Mammary epithelial cell (primary cell): ENCODE measurements at regions of chr6 and their contacts with region 1.

Region 1: GRCh38 chr6:129709769-129710449 is at the start of gene ARHGAP18:
- DNase-seq: peak; percentile 95
- H3K4me3 ChIP-seq: peak within 1 kb of the TSS; percentile 61 to 80 (median 77)
- H3K27ac ChIP-seq: peak within 1 kb of the TSS; percentile 65
- H3K4me1 ChIP-seq: peaks cover 18% of the 10 kb centered on the region
- H3K27me3 ChIP-seq: no peaks in the 10 kb centered on the region
- CTCF ChIP-seq: no peak
- total RNA-seq, gene ARHGAP18: 20.8 to 28.5 TPM

Region 2: DNA sequence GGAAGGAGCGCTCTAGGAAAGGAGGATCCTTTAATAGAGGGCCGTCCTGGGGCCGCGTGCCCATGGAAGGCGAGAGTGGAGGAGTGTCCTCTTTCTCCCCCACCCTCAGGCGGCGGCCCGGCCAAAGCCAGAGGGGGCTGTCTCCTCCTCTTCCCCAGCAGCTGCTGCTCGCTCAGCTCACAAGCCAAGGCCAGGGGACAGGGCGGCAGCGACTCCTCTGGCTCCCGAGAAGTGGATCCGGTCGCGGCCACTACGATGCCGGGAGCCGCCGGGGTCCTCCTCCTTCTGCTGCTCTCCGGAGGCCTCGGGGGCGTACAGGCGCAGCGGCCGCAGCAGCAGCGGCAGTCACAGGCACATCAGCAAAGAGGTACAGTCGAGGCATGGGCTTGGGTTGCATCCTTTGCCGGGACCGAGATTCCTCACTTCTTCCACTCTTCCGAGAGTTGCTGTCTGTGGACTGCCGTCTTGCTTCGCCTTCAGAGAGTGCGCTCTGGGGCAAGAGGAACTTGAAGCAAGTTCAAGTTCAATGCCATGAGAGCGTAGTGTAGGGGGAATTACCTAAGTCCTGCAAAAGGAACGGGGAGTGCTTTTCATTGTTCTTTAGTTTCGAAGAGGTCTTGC is 826.8 kb before region 1 on chr6 and contains the start of gene LAMA2:
- CTCF ChIA-PET with region 1: no interaction called
- dilution Hi-C with region 1: no loop called
- in situ Hi-C with region 1: no loop called
- intact Hi-C with region 1: no loop called
- DNase-seq: no peak
- H3K4me3 ChIP-seq: peak within 1 kb of the TSS in 2 of 3 experiments; percentile 1 to 8
- H3K27ac ChIP-seq: no peak within 1 kb of the TSS
- H3K4me1 ChIP-seq: peaks cover 4% of the 10 kb centered on the region
- H3K27me3 ChIP-seq: peaks cover 9% of the 10 kb centered on the region
- CTCF ChIP-seq: no peak
- total RNA-seq, gene LAMA2: 0.50 to 0.73 TPM

Region 3: DNA sequence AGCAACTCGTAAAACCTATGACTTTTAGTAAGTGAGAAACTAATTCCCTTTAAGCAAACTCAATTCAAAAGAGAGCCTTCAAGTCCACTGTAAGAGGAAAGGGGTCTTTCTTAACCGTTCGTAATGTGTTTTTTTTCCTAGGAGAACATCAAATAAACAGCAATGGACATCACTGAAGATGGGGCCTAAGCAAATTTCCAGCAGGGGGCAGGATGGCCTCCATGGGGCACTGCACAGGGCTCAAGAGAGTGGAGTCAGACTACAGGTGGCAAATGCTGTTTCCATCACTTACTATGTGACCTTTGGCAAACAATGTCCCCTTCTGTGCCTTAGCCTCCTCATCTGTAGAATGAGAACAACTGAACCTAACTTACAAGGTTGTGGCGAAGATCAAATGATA is 88.7 kb before region 1 on chr6:
- CTCF ChIA-PET with region 1: interaction called, 3 read pairs
- dilution Hi-C with region 1: no loop called
- in situ Hi-C with region 1: no loop called
- intact Hi-C with region 1: loop called (anchors 5 kb)
- DNase-seq: no peak
- H3K4me3 ChIP-seq: no peak overlapping the region
- H3K27ac ChIP-seq: no peak overlapping the region
- H3K4me1 ChIP-seq: peaks cover 8% of the 10 kb centered on the region
- H3K27me3 ChIP-seq: no peaks in the 10 kb centered on the region
- CTCF ChIP-seq: peak in 1 of 2 donors; percentile 52

Region 4: GRCh38 chr6:129661536-129662405 is 48.1 kb before region 1 on chr6:
- CTCF ChIA-PET with region 1: no interaction called
- dilution Hi-C with region 1: no loop called
- in situ Hi-C with region 1: no loop called
- intact Hi-C with region 1: loop called (anchors 1 kb)
- DNase-seq: no peak
- H3K4me3 ChIP-seq: no peak overlapping the region
- H3K27ac ChIP-seq: no peak overlapping the region
- H3K4me1 ChIP-seq: peaks cover 4% of the 10 kb centered on the region
- H3K27me3 ChIP-seq: no peaks in the 10 kb centered on the region
- CTCF ChIP-seq: no peak

Region 5: GRCh38 chr6:129672881-129673643 is 36.8 kb before region 1 on chr6:
- CTCF ChIA-PET with region 1: no interaction called
- dilution Hi-C with region 1: no loop called
- in situ Hi-C with region 1: no loop called
- intact Hi-C with region 1: loop called (anchors 2 kb)
- DNase-seq: peak; percentile 65
- H3K4me3 ChIP-seq: peak overlapping the region in 2 of 3 experiments; percentile 12 to 24
- H3K27ac ChIP-seq: peak overlapping the region; percentile 83
- H3K4me1 ChIP-seq: peaks cover 60% of the 10 kb centered on the region
- H3K27me3 ChIP-seq: no peaks in the 10 kb centered on the region
- CTCF ChIP-seq: no peak

Region 6: DNA sequence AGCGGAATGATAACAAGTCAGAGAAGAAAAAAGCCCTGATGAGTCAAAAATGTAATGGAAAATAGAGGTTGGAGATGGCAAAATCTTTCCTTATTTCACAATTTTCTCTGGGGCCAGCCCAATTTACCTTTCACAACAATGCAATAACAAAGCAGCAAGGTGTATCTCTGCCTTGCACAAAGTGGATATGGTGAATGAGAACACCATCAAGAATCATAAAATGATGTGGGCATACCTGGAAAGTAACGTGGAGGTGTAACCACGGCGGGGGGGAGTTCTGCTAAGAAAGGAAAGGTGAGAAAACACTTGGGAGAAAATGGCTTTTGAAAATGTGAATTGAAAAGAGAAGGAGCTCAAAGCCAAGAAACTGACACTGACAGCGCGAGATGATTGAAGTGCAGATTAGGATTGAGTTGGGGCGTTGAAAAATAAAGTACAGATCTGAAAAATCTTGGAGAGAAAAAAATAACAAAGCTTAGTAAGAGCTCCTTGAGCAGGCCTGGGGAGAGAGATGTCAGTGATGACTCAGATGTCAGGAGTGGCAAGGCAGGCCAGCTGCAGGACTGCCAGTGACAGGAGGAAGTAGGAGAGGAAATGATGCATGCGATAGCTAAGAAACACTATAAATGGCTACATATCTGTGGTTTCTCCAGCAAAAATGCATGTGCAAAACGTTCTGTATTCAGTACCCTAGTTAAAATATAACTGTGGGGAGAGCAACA is 26.1 kb before region 1 on chr6:
- CTCF ChIA-PET with region 1: interaction called, 4 read pairs
- dilution Hi-C with region 1: no loop called
- in situ Hi-C with region 1: no loop called
- intact Hi-C with region 1: loop called (anchors 2 kb)
- DNase-seq: peak; percentile 93
- H3K4me3 ChIP-seq: peak overlapping the region in 2 of 3 experiments; percentile 21 to 28
- H3K27ac ChIP-seq: peak overlapping the region; percentile 76
- H3K4me1 ChIP-seq: peaks cover 86% of the 10 kb centered on the region
- H3K27me3 ChIP-seq: no peaks in the 10 kb centered on the region
- CTCF ChIP-seq: no peak

Region 7: DNA sequence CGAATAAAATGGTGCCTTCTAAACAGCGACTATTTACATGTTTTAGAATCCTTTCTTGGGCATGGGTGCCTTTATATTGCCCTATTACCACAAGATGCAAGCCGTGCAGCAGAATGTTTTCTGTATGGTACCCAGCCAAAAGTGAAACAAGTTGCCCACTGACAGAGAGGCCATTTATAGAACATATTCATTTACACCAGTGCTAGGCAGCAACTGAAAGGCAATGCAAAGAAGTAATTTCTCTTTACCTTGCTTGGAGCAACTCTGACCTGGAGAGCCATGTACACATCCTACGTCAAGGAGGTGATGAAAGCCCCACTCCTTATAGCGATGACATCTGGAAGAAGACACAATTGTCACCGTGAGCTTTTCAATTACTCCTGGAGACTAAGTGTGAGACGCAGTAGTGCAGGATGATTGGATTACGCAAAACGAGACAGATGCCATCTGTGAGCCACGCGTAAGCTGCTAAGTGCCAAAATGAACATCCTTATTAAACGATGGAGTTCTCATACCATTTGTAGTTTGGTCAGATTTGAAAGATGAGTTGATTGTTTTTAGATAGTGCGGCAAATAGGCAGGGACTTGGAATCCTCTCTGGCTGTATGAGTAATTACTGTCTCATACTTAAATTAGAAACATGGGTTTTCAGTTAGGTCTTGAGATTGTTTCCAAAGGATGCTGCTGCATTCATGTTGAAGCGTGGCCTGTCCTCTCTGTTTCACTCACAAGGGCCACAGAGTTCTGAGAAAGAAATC is 151.2 kb after region 1 on chr6 and contains the start of gene TMEM244:
- CTCF ChIA-PET with region 1: no interaction called
- dilution Hi-C with region 1: no loop called
- in situ Hi-C with region 1: no loop called
- intact Hi-C with region 1: no loop called
- DNase-seq: no peak
- H3K4me3 ChIP-seq: no peak within 1 kb of the TSS
- H3K27ac ChIP-seq: no peak within 1 kb of the TSS
- H3K4me1 ChIP-seq: peaks cover 17% of the 10 kb centered on the region
- H3K27me3 ChIP-seq: no peaks in the 10 kb centered on the region
- CTCF ChIP-seq: no peak
- total RNA-seq, gene TMEM244: not detected